Left cardiac atrium (tissue), 4 donors: ENCODE measurements at regions of chr6 and their contacts with region 1.

Region 1: DNA sequence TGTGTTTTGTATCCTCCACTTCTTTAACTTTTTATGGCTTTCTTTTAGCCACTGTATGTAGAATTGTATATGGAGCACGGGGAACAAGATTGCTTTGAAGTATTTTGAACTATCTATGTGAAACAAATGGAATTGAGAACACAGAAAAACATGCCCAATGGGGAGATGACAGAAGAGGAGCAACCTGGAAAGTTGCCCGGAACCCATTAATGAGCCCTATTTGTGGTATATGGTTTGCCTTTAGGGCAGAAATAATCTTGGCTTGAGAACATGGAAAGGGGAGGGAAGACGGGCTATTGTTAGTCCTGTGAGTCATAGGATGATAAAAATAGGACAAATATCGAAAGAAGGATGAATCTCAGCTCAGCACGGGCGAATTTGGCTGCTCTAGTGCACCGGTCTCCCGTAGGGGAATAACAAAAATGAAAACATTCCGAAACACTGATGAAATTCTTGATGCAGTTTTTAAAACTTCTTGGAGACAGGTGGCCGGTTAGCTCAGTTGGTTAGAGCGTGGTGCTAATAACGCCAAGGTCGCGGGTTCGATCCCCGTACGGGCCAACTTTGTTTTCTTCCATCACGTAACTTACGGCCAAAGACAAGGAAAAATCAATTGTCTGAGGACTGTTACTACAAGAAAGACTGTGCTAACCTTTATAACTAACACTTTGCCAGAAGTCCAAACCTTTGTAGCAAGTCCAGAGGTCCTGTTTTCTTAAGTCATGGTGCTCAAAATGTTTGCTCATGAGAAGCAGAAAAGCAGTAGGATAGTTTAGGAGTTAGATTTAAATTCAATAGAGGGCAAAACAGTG is 15.7 kb downstream of the HMGN4 start:
- DNase-seq: peak; percentile 77
- ATAC-seq: peak; percentile 81 to 89

Region 2: DNA sequence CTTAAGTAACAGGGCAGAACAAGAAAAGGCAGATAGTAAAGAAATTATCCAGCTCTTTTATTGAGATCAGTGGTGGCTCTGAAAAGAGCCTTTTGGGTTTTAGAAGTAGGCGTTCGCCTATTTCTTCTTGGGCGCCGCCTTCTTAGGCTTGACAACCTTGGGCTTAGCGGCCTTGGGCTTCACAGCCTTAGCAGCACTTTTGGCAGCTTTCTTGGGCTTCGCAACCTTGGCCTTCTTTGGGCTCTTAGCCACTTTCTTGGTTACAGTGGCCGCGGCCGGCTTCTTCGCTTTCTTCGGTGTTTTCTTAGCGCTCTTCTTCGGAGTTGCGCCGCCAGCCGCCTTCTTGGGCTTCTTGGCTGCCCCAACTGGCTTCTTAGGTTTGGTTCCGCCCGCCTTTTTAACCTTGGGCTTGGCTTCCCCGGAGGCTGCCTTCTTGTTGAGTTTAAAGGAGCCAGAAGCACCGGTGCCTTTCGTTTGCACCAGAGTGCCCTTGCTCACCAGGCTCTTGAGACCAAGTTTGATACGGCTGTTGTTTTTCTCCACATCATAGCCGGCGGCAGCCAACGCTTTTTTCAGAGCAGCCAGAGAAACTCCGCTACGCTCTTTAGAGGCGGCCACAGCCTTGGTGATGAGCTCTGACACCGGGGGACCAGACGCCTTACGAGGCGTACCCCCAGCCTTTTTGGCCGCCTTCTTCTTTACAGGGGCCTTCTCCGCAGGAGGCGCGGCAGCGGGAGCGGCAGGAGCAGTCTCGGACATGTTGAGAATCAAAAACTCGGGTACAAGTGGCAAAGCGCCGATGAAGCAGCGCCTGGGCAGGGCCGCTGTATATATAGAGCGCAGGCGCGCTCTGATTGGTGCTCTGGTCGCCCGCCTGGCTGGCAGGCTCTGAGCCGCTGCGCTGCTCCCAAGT is 497.9 kb before region 1 on chr6:
- intact Hi-C with region 1: no loop called
- DNase-seq: peak; percentile 91
- ATAC-seq: peak; percentile 93 to 96

Region 3: DNA sequence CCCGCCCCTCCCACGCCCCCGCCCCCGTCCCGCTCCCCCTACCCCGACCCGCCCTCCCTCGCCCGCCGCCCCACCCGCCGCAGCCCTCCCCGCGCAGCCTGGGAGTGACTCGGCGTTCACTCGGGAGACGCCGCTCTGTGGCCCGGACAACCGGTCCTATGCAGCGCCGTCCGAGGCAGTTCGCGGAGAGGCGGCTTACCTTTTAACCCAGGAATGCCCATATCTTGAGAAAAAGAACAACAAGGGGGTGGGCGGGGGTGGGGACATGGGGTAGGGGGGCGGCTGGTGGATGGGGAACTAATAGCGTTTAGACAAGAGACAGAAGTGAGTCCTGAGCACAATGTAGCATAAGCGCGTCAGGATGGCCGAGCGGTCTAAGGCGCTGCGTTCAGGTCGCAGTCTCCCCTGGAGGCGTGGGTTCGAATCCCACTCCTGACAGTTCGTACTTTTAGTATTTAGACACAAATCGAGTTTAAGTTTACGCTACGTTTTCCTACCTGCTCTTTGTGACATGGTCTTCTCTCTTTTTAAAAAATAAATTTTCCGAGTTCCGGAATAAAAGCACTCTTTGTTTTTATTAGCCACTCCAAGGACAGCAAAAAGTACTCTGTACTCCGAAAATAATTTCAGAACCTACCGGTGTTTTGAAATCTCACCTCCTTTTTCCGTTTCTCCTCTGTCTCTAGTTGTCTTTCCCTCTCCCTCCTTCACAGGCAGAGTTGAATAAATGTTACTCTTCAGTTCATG is 32.8 kb before region 1 on chr6:
- intact Hi-C with region 1: loop called in 1 of 2 experiments (anchors 2 kb)
- DNase-seq: peak; percentile 91
- ATAC-seq: peak; percentile 88 to 94

Region 4: GRCh38 chr6:26568601-26569432 is 15.0 kb after region 1 on chr6:
- intact Hi-C with region 1: loop called in 1 of 2 experiments (anchors 2 kb)
- DNase-seq: peak; percentile 82
- ATAC-seq: peak; percentile 83 to 89

Region 5: DNA sequence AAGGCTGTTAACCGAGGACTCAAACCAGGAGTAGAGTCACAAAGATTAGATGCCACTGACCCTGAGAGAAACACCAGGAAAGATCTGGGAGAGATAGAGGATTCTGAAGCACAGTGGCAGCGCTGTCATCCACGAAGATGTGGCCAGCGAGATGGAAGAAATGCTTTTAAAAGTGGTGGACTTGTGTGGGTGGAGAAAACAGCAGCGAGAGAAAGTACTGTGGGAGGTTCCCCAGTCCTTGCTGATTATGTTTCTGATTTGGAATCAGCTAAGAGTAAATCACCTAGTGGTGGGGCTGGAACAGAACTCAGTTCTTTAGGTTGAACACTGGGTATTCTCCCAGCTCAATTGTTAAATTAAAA is 106.1 kb after region 1 on chr6:
- intact Hi-C with region 1: no loop called
- DNase-seq: no peak
- ATAC-seq: peak; percentile 13 to 22

Region 6: GRCh38 chr6:27157459-27158315 is 603.8 kb after region 1 on chr6:
- intact Hi-C with region 1: no loop called
- DNase-seq: peak; percentile 70
- ATAC-seq: peak; percentile 87 to 92